ENCODE measurements at regions of chr15 and their contacts with region 1.

Region 1: DNA sequence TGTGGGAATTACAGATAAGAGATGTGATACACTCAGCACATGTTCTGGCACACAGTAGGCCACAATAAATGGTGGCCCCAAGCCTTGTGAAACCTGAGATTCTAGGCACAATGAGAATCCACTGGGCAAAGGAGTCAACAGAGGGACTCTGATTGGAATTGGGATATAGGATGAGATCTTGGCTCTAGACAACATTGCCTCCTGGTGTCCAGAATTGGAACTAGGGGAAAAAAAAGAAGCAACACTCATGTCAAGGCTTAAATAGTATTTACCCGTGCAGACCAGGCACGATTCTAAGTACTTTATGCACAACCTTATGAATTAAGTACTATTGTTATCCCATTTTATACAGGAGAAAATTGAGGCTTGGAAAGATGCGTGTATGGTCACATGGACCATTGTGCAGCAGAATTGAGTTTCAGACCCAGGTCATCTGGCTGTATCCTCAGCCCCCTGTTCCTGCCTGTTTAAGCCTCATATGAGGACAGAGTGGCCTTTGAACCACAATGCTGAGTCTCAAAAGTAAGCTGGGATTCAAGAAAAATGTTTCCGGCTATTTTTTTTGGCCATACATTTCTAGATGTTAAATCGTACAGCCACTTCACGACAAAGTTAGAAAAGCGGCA is 124.8 kb downstream of the SV2B start:
- DNase-seq: no peak
- ATAC-seq: peak in 1 of 2 donors; percentile 49

Region 2: DNA sequence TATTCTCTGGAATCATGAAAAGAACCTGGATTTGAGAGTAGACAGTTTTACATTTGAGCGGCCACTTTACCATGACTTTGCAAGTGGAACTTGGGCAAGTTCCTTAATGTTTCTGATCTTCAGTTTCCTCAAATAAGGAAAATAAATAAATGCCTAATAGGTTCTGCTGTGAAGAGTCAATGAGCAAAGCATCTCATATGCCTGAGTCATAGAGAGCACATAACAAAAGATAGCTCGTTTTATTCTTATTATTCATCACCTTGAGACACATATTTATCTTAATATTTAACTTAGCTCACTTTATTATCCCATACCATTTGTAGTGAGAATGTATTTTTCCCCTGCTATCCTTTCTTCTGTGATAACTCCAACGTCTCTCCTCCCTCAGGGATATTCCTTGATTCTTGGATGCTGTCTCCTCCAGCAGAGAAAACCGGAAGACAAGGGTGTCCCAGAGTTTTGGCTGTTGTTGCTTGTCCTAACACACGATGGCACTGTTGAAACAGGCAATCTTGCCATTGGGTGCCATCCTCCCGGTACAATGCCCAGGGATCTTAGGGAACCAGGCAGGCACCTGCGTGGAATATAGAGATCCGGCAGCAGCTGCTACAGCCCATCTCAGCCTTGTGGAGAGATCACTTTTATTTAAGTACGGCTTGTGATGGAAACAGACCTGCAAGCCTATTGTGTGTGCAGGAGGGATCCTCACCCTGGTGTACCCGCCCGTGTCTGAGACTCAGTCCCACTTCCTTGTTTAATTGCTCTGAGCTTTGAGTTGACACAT is 169.1 kb before region 1 on chr15:
- intact Hi-C with region 1: loop called (anchors 1 to 5 kb)
- DNase-seq: peak; percentile 52
- ATAC-seq: peak; percentile 78 to 87

Region 3: GRCh38 chr15:91271565-91272153 is 46.8 kb after region 1 on chr15:
- intact Hi-C with region 1: loop called in 1 of 2 experiments (anchors 1 kb)
- DNase-seq: peak; percentile 40
- ATAC-seq: peak; percentile 57 to 71